ENCODE measurements at regions of chr6 and their contacts with region 1.

Region 1: DNA sequence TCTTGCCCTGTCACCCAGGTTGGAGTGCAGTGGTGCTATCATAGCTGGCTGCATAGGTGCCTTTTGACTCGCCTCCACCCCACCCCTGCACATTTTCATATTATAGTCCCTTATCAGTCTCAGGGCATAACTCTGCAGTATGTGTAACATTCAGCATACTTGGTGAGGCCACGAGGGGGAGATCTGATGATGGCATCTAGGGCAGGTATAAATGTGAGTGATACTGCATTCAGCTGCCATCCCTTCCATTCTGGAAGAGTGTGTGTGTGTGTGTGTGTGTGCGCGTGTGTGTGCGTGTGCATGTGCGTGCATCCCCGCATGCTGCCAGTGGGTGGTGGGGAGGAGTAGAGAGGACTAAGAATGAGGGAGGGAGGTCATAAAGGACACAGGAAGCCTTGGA is 81.4 kb downstream of the JARID2 start:
- DNase-seq: peak in 7 of 9 donors; percentile 26 to 59 (median 48)
- ATAC-seq: peak; percentile 74
- H3K4me3 ChIP-seq: no peak overlapping the region
- H3K4me3 Mint-ChIP-seq: peak overlapping the region in 5 of 10 donors; percentile 12 to 48 (median 45)
- H3K27ac ChIP-seq: no peak overlapping the region
- H3K27ac Mint-ChIP-seq: peak overlapping the region in 7 of 9 donors; percentile 44 to 90 (median 67)
- H3K4me1 ChIP-seq: peaks cover 26 to 54% of the 10 kb centered on the region in 2 donors
- H3K4me1 Mint-ChIP-seq: peaks cover 42 to 94% (median 81%) of the 10 kb centered on the region in 7 donors
- H3K27me3 ChIP-seq: no peaks in the 10 kb centered on the region
- H3K27me3 Mint-ChIP-seq: no peaks in the 10 kb centered on the region

Region 2: GRCh38 chr6:15305496-15305895 is 21.8 kb before region 1 on chr6:
- CTCF ChIA-PET with region 1: no interaction called
- POLR2A ChIA-PET with region 1: interaction called, 4 read pairs
- intact Hi-C with region 1: loop called in 1 of 2 experiments (anchors 1 kb)
- DNase-seq: no peak
- ATAC-seq: peak; percentile 39
- H3K4me3 ChIP-seq: no peak overlapping the region
- H3K4me3 Mint-ChIP-seq: peak overlapping the region in 6 of 10 donors; percentile 14 to 59 (median 37)
- H3K27ac ChIP-seq: no peak overlapping the region
- H3K27ac Mint-ChIP-seq: peak overlapping the region in 8 of 9 donors; percentile 19 to 78 (median 64)
- H3K4me1 ChIP-seq: peaks cover 15 to 26% of the 10 kb centered on the region in 2 donors
- H3K4me1 Mint-ChIP-seq: peaks cover 68 to 86% (median 76%) of the 10 kb centered on the region in 7 donors
- H3K27me3 ChIP-seq: no peaks in the 10 kb centered on the region
- H3K27me3 Mint-ChIP-seq: no peaks in the 10 kb centered on the region

Region 3: DNA sequence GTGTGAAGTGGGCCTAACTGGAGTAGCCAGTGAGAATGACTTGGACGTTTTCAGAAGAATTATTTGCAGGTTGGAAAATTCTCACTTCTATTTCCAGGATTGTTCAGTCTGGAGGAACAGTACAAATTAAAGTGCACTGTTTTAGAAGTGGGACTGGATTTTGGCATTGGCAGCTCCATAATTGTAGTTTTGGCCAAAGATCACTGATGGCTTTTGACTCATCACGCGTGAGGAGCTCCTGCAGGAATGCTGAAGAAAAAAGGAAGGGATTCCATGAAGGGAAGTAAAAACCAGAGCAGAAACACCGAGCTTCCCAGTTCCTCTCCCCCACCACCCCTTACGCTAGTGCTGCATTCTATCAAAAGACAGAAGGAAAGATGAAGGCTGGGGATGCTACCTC is 22.1 kb after region 1 on chr6:
- CTCF ChIA-PET with region 1: interaction called, 3 read pairs
- POLR2A ChIA-PET with region 1: no interaction called
- intact Hi-C with region 1: loop called in 1 of 2 experiments (anchors 2 kb)
- DNase-seq: no peak
- ATAC-seq: no peak
- H3K4me3 ChIP-seq: no peak overlapping the region
- H3K4me3 Mint-ChIP-seq: peak overlapping the region in 2 of 10 donors; percentile 37 to 53
- H3K27ac ChIP-seq: no peak overlapping the region
- H3K27ac Mint-ChIP-seq: peak overlapping the region in 6 of 9 donors; percentile 22 to 89 (median 62)
- H3K4me1 ChIP-seq: peaks cover 14 to 58% of the 10 kb centered on the region in 2 donors
- H3K4me1 Mint-ChIP-seq: peaks cover 58 to 98% (median 89%) of the 10 kb centered on the region in 7 donors
- H3K27me3 ChIP-seq: no peaks in the 10 kb centered on the region
- H3K27me3 Mint-ChIP-seq: no peaks in the 10 kb centered on the region

Region 4: GRCh38 chr6:15441215-15441868 is 114.1 kb after region 1 on chr6:
- CTCF ChIA-PET with region 1: no interaction called
- POLR2A ChIA-PET with region 1: no interaction called
- intact Hi-C with region 1: loop called (anchors 1 kb)
- DNase-seq: peak in 5 of 9 donors; percentile 36 to 55 (median 41)
- ATAC-seq: peak; percentile 74
- H3K4me3 ChIP-seq: no peak overlapping the region
- H3K4me3 Mint-ChIP-seq: peak overlapping the region in 1 of 10 donors; percentile 42
- H3K27ac ChIP-seq: no peak overlapping the region
- H3K27ac Mint-ChIP-seq: peak overlapping the region in 1 of 9 donors; percentile 21
- H3K4me1 ChIP-seq: peaks cover 14 to 20% of the 10 kb centered on the region in 2 donors
- H3K4me1 Mint-ChIP-seq: peaks cover 54 to 88% (median 74%) of the 10 kb centered on the region in 7 donors
- H3K27me3 ChIP-seq: no peaks in the 10 kb centered on the region
- H3K27me3 Mint-ChIP-seq: no peaks in the 10 kb centered on the region

Region 5: GRCh38 chr6:15491255-15491985 is 164.1 kb after region 1 on chr6:
- CTCF ChIA-PET with region 1: no interaction called
- POLR2A ChIA-PET with region 1: no interaction called
- intact Hi-C with region 1: loop called (anchors 1 to 2 kb)
- DNase-seq: peak; percentile 48 to 77 (median 70)
- ATAC-seq: peak; percentile 88
- H3K4me3 ChIP-seq: no peak overlapping the region
- H3K4me3 Mint-ChIP-seq: peak overlapping the region in 6 of 10 donors; percentile 2 to 17 (median 3)
- H3K27ac ChIP-seq: peak overlapping the region; percentile 2
- H3K27ac Mint-ChIP-seq: peak overlapping the region; percentile 29 to 88 (median 67)
- H3K4me1 ChIP-seq: peaks cover 0 to 11% of the 10 kb centered on the region in 2 donors
- H3K4me1 Mint-ChIP-seq: peaks cover 24 to 58% (median 41%) of the 10 kb centered on the region in 7 donors
- H3K27me3 ChIP-seq: no peaks in the 10 kb centered on the region
- H3K27me3 Mint-ChIP-seq: no peaks in the 10 kb centered on the region

Region 6: GRCh38 chr6:15770347-15771143 is 443.3 kb after region 1 on chr6:
- CTCF ChIA-PET with region 1: no interaction called
- POLR2A ChIA-PET with region 1: no interaction called
- intact Hi-C with region 1: no loop called
- DNase-seq: no peak
- ATAC-seq: no peak
- H3K4me3 ChIP-seq: no peak overlapping the region
- H3K4me3 Mint-ChIP-seq: no peak overlapping the region
- H3K27ac ChIP-seq: no peak overlapping the region
- H3K27ac Mint-ChIP-seq: peak overlapping the region in 1 of 9 donors; percentile 71
- H3K4me1 ChIP-seq: no peaks in the 10 kb centered on the region
- H3K4me1 Mint-ChIP-seq: peaks cover 0 to 8% (median 0%) of the 10 kb centered on the region in 7 donors
- H3K27me3 ChIP-seq: no peaks in the 10 kb centered on the region
- H3K27me3 Mint-ChIP-seq: peaks cover 0 to 6% (median 4%) of the 10 kb centered on the region in 5 donors

Measured in naive thymus-derived CD4-positive, alpha-beta T cell (primary cell).